Activated naive CD4-positive, alpha-beta T cell treated with anti-CD3 and anti-CD28 coated beads for 36 hours (primary cell): ENCODE measurements at regions of chr20 and their contacts with region 1.

Region 1: DNA sequence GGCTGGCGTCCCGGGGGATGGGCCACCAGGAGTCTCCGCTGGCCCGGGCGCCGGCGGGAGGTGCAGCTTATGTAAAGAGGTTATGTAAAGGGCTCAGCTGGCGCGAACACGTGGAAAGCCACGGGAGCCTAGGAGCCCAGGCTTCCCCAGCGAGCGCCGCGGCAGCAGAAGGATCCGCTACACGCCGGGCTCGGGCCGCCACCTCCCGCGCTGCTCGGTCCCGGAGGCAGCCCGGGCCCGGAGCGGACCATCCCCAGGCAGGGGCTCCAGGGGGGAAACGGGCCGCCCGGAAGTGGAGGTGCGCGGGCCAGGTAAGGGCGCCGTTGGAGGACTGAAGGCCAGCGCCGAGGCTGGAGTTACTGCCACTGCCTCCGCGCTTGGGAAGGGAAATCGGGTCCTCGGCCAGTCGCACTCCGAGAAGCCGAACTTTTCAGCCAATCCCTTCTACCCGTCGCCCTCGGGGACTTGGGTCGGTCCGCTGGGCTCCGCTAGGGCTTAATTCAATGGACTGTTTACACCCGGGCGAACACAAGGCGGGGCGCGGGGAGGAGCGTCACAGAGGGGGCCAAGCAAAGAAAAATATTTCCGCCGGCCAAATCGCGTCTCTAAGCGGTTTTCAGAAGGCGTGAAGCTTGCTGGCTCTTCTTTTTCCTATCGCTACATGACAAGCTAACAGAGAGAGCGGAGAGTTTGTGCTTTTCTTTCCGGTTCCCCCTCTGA is 398 bp downstream of the STK35 start:
- DNase-seq: peak; percentile 91
- H3K4me3 Mint-ChIP-seq: peak overlapping the region; percentile 91
- H3K27ac Mint-ChIP-seq: peak overlapping the region; percentile 100
- H3K4me1 Mint-ChIP-seq: peaks cover 32% of the 10 kb centered on the region
- H3K27me3 Mint-ChIP-seq: no peaks in the 10 kb centered on the region

Region 2: GRCh38 chr20:833450-834150 is 1268.4 kb before region 1 on chr20 and contains the start of gene FAM110A:
- CTCF ChIA-PET with region 1: no interaction called
- intact Hi-C with region 1: loop called (anchors 5 kb)
- DNase-seq: peak; percentile 97
- H3K4me3 Mint-ChIP-seq: peak within 1 kb of the TSS; percentile 92
- H3K27ac Mint-ChIP-seq: peak within 1 kb of the TSS; percentile 73
- H3K4me1 Mint-ChIP-seq: peaks cover 37% of the 10 kb centered on the region
- H3K27me3 Mint-ChIP-seq: no peaks in the 10 kb centered on the region
- total RNA-seq, gene FAM110A: 15.4 to 16.2 TPM

Region 3: DNA sequence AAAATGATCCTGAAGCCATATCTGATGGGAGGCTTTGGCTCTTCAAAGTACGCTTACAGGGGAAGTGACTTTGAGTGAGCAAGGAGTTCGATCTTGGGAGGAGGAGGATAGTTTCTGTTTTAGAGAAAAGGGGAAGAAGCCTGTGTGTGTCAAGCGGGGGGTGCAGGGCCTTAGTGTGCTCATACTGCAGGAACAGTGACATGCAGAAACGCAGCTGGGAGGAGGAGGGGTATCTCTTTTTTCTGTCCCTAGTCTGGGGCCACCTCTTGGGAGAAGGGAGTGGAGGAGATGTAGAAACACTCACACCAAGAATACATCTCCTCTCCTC is 564.3 kb before region 1 on chr20:
- CTCF ChIA-PET with region 1: no interaction called
- intact Hi-C with region 1: no loop called
- DNase-seq: no peak
- H3K4me3 Mint-ChIP-seq: no peak overlapping the region
- H3K27ac Mint-ChIP-seq: no peak overlapping the region
- H3K4me1 Mint-ChIP-seq: peaks cover 16% of the 10 kb centered on the region
- H3K27me3 Mint-ChIP-seq: no peaks in the 10 kb centered on the region

Region 4: DNA sequence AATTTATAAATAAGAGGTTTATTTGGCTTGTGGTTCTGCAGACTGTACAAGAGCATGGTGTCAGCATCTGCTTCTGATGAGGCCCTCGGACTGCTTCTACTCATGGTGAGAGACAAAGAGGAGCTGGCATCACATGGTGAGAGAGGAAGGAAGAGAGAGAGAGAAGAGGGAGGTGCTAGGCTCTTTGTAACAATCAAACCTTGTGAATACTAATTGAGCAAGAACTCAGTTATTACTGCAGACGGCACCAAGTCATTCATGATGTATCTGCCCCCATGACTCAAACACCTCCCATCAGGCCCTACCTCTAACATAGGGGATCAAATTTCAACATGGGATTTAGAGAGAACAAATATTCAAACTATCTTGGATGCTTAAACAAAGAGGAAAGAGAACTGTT is 438.1 kb before region 1 on chr20:
- CTCF ChIA-PET with region 1: no interaction called
- intact Hi-C with region 1: loop called (anchors 10 kb)
- DNase-seq: peak; percentile 69
- H3K4me3 Mint-ChIP-seq: peak overlapping the region; percentile 45
- H3K27ac Mint-ChIP-seq: peak overlapping the region; percentile 98
- H3K4me1 Mint-ChIP-seq: peaks cover 90% of the 10 kb centered on the region
- H3K27me3 Mint-ChIP-seq: no peaks in the 10 kb centered on the region

Region 5: GRCh38 chr20:2172305-2173175 is 70.5 kb after region 1 on chr20:
- CTCF ChIA-PET with region 1: interaction called, 6 read pairs
- intact Hi-C with region 1: loop called (anchors 2 kb)
- DNase-seq: peak; percentile 84
- H3K4me3 Mint-ChIP-seq: no peak overlapping the region
- H3K27ac Mint-ChIP-seq: no peak overlapping the region
- H3K4me1 Mint-ChIP-seq: peaks cover 3% of the 10 kb centered on the region
- H3K27me3 Mint-ChIP-seq: peaks cover 3% of the 10 kb centered on the region

Region 6: DNA sequence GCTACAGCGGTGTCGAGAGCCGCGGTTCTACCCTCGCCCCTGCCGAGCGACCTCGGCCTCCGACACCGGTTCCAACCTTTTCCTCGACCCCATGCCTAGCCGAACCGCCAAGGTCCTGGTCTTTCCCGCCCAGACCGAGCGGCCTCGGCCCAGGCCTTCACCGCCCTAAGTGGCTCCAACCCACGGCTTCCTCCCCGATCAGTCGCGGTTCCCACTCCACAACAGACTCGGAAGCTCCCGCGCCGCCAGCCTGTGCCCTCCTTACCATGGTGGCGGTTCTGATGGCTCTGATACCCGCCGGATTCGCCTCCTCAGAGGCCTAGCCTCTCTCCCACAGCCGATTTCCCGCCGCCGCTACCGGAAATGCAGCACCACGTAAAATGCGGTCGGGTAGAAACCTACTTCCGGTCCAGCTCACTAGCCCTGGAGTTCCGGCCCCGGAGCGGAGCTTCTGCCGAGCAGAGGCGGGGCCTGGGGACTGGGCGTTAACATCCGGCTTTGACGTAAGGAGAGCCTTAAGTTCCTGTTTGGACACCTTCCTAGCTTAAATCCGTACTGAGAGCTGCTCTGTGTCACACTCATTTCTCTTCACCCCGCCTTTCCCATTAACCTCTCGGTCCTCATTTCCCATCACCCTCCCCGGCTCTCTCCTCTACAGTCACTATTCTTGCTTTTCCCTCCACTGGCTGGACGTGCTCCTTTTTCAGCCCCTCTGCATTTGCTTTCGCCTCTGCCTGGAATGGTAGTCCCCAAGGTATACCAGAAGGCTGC is 368.6 kb after region 1 on chr20 and contains the start of gene SNRPB:
- CTCF ChIA-PET with region 1: no interaction called
- intact Hi-C with region 1: loop called (anchors 1 kb)
- DNase-seq: peak; percentile 98
- H3K4me3 Mint-ChIP-seq: peak within 1 kb of the TSS; percentile 99
- H3K27ac Mint-ChIP-seq: peak within 1 kb of the TSS; percentile 100
- H3K4me1 Mint-ChIP-seq: peaks cover 52% of the 10 kb centered on the region
- H3K27me3 Mint-ChIP-seq: no peaks in the 10 kb centered on the region
- total RNA-seq, gene SNRPB: 422 to 431 TPM